Ascending aorta (tissue), 2 donors: ENCODE measurements at regions of chr7 and their contacts with region 1.

Region 1: DNA sequence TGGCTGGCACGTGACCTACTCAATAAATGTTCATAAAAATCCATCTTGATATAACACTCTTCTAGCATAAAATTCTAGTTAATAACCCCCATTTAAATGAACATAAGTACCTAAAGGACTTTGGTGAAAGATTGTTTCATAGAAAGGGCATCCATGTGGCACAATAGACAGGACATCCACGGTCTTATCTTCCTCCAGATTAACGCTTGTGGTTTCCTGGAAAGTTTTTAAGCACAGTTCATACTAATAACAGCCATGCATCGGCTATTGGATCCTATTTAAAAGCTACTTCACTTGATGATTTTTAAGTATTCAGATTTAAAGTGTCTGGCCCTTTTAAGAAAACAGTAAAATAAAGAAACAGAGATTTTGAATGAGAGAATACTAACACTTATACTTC is 288.3 kb downstream of the AHR start:
- DNase-seq: no peak
- H3K4me3 ChIP-seq: no peak overlapping the region
- H3K27ac ChIP-seq: no peak overlapping the region
- H3K4me1 ChIP-seq: no peaks in the 10 kb centered on the region
- H3K27me3 ChIP-seq: no peaks in the 10 kb centered on the region
- CTCF ChIP-seq: no peak

Region 2: GRCh38 chr7:17347401-17347800 is 239.3 kb before region 1 on chr7:
- intact Hi-C with region 1: no loop called
- DNase-seq: no peak
- H3K4me3 ChIP-seq: no peak overlapping the region
- H3K27ac ChIP-seq: no peak overlapping the region
- H3K4me1 ChIP-seq: peaks cover 0 to 5% of the 10 kb centered on the region in 2 donors
- H3K27me3 ChIP-seq: no peaks in the 10 kb centered on the region
- CTCF ChIP-seq: no peak

Region 3: DNA sequence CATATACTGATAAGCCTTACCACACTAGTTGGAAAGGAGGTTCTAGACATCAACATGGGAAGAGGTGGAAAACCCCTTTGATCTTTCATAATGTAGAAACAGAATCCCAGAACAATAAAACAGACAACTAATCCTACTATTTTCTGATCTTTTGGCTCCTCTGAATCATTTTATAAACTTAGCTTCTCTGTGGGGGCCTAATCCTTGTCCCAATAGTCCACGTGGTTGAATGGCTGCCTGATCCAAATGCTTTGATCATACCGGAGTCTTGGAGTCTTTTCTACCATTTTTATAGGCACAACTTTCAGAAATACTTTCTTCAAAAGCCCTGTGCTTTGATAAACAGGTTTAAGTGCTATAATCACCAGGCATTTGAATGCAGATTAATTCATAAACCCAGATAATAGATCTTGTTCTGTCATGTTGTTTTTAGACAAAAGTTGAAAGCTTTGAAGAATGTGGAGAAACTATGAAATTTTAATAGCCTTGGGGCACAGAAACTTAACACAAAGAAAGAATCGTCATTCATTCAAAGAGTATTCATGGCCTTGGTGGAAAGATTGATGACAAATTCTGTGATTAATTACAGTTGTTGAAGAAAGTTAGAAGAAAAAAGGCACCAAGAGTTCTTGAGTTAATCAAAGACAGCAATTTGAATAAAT is 124.5 kb before region 1 on chr7:
- intact Hi-C with region 1: no loop called
- DNase-seq: no peak
- H3K4me3 ChIP-seq: no peak overlapping the region
- H3K27ac ChIP-seq: no peak overlapping the region
- H3K4me1 ChIP-seq: no peaks in the 10 kb centered on the region
- H3K27me3 ChIP-seq: no peaks in the 10 kb centered on the region
- CTCF ChIP-seq: no peak

Region 4: DNA sequence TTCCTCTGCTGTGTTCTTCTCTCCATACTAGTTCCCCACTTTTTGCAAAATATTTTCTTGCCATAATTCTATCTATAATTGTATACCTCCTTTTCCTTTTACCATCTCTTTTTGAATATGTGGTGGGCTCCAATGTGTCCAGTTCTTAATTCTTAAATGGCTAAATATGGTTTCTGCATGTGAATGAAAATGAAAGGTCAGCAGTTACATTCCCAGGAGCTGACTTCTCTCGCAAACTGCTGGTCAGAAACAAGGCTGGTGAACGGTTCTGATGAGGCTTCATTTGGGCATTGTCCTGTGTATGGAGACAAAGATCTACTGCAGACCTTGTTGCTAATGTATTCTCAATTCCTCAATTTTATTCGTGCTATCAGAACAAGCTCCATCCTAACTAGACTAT is 44.4 kb after region 1 on chr7:
- intact Hi-C with region 1: loop called (anchors 1 kb)
- DNase-seq: no peak
- H3K4me3 ChIP-seq: no peak overlapping the region
- H3K27ac ChIP-seq: no peak overlapping the region
- H3K4me1 ChIP-seq: no peaks in the 10 kb centered on the region
- H3K27me3 ChIP-seq: no peaks in the 10 kb centered on the region
- CTCF ChIP-seq: no peak